ENCODE measurements at regions of chr1 and their contacts with region 1.

Region 1: DNA sequence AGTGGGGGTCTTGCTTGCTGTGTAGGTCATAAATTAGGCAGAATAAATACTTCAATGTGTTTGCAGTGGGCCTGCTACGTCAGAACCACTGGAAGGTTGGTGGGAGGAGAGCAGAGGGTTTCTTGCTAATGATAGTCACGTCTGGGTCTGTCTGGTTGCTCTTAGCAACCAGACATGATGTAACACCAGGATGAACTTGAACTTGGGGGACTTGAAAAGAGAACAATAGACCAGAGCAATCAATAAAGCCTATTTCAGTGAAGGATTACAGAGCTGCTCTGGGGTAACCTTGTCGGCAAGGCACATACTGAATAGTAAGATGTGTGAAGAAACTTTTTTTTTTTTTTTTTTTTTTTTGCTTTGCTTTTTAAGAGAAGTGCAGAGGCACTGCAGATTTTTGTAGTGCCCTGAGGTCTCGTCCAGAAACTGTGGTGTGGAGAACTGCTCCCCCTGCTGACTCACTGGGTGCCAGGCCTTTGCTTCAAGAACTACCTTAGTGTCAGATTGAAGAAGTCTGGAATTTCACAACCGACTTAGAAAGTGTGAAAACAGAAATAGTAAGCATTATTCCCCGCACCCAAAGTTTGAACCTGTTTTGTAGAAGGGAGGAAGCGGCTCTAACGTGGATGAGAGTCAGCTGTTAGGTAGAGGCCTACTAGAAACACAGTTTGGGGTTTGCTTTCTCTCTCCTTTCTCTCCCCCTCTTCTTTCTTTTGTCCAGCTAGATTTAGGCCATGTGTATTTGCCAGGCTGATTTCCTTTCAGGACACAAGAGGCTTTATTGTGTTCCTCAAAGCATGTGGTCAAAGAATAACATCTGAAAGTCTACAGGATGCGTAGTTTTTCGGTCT is 271.6 kb downstream of the TM2D1 start:
- DNase-seq: peak; percentile 86 to 90 (median 88)
- ATAC-seq: peak; percentile 69 to 84 (median 81)
- H3K4me3 ChIP-seq: no peak overlapping the region
- H3K27ac ChIP-seq: peak overlapping the region; percentile 64 to 90 (median 78)
- H3K4me1 ChIP-seq: peaks cover 17 to 65% (median 61%) of the 10 kb centered on the region in 12 donors
- H3K27me3 ChIP-seq: no peaks in the 10 kb centered on the region
- CTCF ChIP-seq: peak; percentile 75 to 90 (median 80)
- POLR2A ChIP-seq: no peak

Region 2: GRCh38 chr1:60969971-60970509 is 483.3 kb before region 1 on chr1:
- intact Hi-C with region 1: loop called in 6 of 10 experiments (anchors 5 to 10 kb)
- DNase-seq: no peak
- ATAC-seq: peak; percentile 48 to 78 (median 60)
- H3K4me3 ChIP-seq: peak overlapping the region in 4 of 12 donors; percentile 2 to 25 (median 10)
- H3K27ac ChIP-seq: peak overlapping the region in 8 of 12 donors; percentile 31 to 79 (median 62)
- H3K4me1 ChIP-seq: peaks cover 0 to 15% (median 2%) of the 10 kb centered on the region in 12 donors
- H3K27me3 ChIP-seq: no peaks in the 10 kb centered on the region
- CTCF ChIP-seq: peak in 11 of 12 donors; percentile 32 to 69 (median 56)
- POLR2A ChIP-seq: no peak

Region 3: DNA sequence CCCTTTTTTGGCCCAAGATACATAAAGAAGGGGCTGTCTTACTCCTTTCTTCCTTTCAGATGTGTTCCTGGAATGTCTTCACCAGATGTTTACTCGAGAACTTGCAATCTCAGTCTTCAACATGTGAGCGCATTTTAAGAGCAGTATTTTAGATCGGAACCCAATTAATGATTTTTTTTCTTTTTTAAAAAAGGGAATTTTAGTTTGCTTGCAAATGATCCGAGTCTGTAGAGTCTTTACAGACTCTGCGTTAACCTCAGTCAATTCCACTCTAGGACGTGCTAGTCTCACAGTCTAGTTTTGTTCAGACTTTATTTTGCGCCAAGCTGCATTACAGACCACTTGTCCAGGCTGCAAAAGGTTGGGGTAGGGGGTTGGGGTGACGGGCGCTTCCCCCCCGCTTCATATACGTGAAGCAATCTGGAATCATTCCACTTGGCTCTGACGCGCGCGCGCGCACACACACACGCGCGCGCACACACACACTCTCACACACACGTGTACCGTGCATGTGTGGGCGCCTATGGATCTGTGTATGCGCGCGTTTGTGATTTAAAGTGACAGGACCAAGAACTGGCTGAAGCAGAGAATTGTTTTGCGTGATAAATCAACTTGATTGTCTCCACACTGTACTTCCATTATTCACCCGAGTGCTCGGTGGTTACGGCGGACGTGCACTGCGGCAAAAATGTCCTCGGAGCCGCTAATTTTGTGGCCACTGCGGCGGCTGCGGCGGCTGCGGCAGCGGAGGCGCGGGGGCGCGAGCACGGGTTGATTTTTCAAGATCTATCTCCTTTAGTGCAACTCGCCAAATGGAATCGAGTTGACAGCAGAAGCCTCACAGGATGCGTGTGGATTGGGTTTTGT is 396.5 kb before region 1 on chr1:
- intact Hi-C with region 1: loop called in 2 of 10 experiments (anchors 2 to 5 kb)
- DNase-seq: peak; percentile 55 to 78 (median 61)
- ATAC-seq: peak; percentile 30 to 69 (median 61)
- H3K4me3 ChIP-seq: peak overlapping the region; percentile 38 to 92 (median 72)
- H3K27ac ChIP-seq: peak overlapping the region; percentile 68 to 99 (median 92)
- H3K4me1 ChIP-seq: peaks cover 0 to 57% (median 34%) of the 10 kb centered on the region in 12 donors
- H3K27me3 ChIP-seq: peaks cover 0 to 5% (median 0%) of the 10 kb centered on the region in 9 donors
- CTCF ChIP-seq: no peak
- POLR2A ChIP-seq: no peak

Region 4: DNA sequence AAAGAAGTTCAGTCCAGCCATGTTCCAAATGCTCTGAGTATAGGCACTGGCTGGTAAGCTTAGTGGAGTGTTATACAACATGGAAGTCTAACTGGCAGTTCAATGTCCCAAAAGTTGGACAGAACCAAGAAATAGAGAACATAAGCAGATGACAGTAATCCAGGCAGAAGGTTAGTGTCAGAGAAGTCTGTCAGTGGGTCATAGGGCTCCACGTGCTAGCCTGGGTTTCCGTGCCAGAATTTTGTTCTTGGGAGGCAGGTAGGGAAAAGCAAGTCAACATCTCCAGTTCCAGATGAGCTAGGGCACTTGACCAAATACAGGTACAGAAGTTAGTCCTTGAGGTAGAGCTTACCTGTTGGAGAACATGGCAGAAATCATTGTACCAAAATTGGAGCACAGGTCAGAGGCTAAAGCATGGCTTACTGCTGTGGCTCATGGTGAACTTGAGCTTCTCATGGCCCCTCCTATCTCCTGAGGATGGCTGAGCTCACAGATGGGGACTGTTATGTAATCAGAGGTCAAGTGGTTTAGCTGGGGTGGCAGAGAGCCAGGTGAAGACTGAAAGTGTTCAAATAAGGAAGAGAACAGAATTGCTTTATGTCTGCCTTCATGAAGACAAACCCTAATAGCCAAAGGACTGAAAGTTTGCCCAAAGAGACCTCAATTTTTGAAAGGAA is 200.1 kb before region 1 on chr1:
- intact Hi-C with region 1: loop called in 1 of 10 experiments (anchors 10 kb)
- DNase-seq: peak in 4 of 5 donors; percentile 76 to 88 (median 80)
- ATAC-seq: peak; percentile 53 to 84 (median 76)
- H3K4me3 ChIP-seq: no peak overlapping the region
- H3K27ac ChIP-seq: peak overlapping the region in 11 of 12 donors; percentile 35 to 80 (median 74)
- H3K4me1 ChIP-seq: peaks cover 6 to 78% (median 42%) of the 10 kb centered on the region in 12 donors
- H3K27me3 ChIP-seq: no peaks in the 10 kb centered on the region
- CTCF ChIP-seq: no peak
- POLR2A ChIP-seq: no peak

Region 5: GRCh38 chr1:61301824-61302657 is 151.3 kb before region 1 on chr1:
- intact Hi-C with region 1: no loop called
- DNase-seq: peak in 1 of 5 donors; percentile 37
- ATAC-seq: peak; percentile 80 to 91 (median 86)
- H3K4me3 ChIP-seq: no peak overlapping the region
- H3K27ac ChIP-seq: peak overlapping the region; percentile 12 to 79 (median 43)
- H3K4me1 ChIP-seq: peaks cover 0 to 53% (median 33%) of the 10 kb centered on the region in 12 donors
- H3K27me3 ChIP-seq: no peaks in the 10 kb centered on the region
- CTCF ChIP-seq: no peak
- POLR2A ChIP-seq: no peak

Region 6: DNA sequence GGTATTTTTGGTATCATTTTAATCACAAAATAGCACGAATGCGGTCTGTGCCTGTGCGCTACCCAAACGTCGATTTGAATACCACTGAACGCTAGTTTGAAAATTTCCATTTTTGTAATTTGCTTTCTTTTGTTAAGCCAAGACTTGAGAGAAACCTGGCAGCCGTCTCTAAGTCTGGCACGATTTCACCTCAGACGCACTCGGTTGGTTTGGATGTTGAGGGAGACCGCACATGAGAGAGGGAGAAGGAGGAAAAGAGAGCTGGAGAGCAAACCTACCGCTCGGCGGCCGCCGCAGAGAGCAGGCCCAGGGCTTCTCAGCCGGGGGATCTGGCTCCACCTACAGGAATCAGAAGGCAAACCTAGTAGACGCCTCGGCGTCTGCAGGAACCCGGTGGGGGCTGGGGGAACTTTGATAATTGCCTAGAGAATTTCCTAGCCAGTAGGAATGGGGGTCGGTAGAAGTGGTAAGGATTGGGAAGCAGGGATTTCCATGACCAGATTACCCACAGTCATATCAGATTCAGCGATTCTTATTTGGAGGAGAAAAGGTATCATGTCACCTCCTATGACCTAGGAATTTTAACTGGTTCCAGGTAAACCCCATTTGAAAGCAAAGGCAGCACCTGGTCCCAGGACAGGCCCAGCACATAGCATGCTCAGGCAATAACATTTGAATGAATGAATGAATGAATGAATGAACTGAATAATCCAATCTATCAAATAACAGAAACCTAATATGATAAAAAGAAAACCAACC is 188.4 kb after region 1 on chr1:
- intact Hi-C with region 1: loop called in 3 of 10 experiments (anchors 5 to 10 kb)
- DNase-seq: peak; percentile 76 to 88 (median 78)
- ATAC-seq: peak; percentile 71 to 90 (median 86)
- H3K4me3 ChIP-seq: peak overlapping the region in 8 of 12 donors; percentile 3 to 50 (median 41)
- H3K27ac ChIP-seq: peak overlapping the region in 11 of 12 donors; percentile 45 to 88 (median 77)
- H3K4me1 ChIP-seq: peaks cover 0 to 41% (median 10%) of the 10 kb centered on the region in 12 donors
- H3K27me3 ChIP-seq: no peaks in the 10 kb centered on the region
- CTCF ChIP-seq: peak; percentile 62 to 89 (median 76)
- POLR2A ChIP-seq: no peak

Measured in heart left ventricle (tissue), 16 donors.